B cell (primary cell): ENCODE measurements at regions of chr6 and their contacts with region 1.

Region 1: DNA sequence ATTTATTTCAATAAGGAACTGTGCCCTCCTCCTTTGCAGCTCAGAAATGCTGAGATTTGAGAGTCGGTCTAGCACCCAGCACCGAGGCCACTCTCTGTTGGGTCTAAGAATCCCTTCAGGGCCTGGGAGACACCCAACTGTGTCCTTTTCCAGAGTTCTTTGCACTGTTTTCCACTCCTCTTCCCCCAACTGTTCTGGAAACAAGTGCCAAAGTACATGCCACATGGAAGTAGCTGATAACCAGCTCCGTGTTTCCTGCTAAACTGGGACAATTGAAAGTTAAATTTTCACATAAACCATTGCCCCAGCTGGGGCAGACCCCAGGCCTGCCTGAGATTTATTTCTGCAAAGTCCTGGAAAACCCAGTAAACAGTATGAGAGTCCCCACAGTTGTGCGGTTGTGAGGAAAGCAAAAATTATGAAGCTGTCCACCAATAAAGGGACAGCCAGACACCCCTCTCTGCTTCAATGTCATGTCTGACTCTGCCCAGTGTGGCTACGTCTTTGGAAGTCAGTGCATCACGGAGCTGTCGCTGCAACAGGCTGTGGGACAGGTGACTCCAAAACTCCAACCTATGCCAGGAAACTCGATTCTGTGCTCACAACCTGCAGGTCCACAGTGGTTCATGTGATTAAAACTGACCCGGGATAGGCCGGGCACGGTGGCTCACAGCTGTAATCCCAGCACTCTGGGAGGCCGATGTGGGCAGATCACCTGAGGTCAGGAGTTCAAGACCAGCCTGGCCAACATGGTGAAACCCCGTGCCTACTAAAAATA is 178.0 kb upstream of the AFDN start:
- DNase-seq: no peak
- ATAC-seq: no peak
- H3K4me3 ChIP-seq: no peak overlapping the region
- H3K4me3 Mint-ChIP-seq: no peak overlapping the region
- H3K27ac ChIP-seq: no peak overlapping the region
- H3K27ac Mint-ChIP-seq: no peak overlapping the region
- H3K4me1 ChIP-seq: no peaks in the 10 kb centered on the region
- H3K4me1 Mint-ChIP-seq: peaks cover 12% of the 10 kb centered on the region
- H3K27me3 ChIP-seq: peaks cover 0 to 4% (median 2%) of the 10 kb centered on the region in 4 experiments
- H3K27me3 Mint-ChIP-seq: peaks cover 16% of the 10 kb centered on the region
- CTCF ChIP-seq: no peak

Region 2: GRCh38 chr6:167687116-167687725 is 38.5 kb after region 1 on chr6:
- CTCF ChIA-PET with region 1: no interaction called
- POLR2A ChIA-PET with region 1: no interaction called
- intact Hi-C with region 1: no loop called
- DNase-seq: no peak
- ATAC-seq: no peak
- H3K4me3 ChIP-seq: no peak overlapping the region
- H3K4me3 Mint-ChIP-seq: no peak overlapping the region
- H3K27ac ChIP-seq: no peak overlapping the region
- H3K27ac Mint-ChIP-seq: no peak overlapping the region
- H3K4me1 ChIP-seq: peaks cover 0 to 5% of the 10 kb centered on the region in 2 donors
- H3K4me1 Mint-ChIP-seq: peaks cover 17% of the 10 kb centered on the region
- H3K27me3 ChIP-seq: peaks cover 0 to 26% (median 2%) of the 10 kb centered on the region in 4 experiments
- H3K27me3 Mint-ChIP-seq: peaks cover 42% of the 10 kb centered on the region
- CTCF ChIP-seq: no peak

Region 3: GRCh38 chr6:167699141-167699931 is 50.6 kb after region 1 on chr6:
- CTCF ChIA-PET with region 1: no interaction called
- POLR2A ChIA-PET with region 1: interaction called, 10 read pairs
- intact Hi-C with region 1: no loop called
- DNase-seq: peak; percentile 75
- ATAC-seq: peak; percentile 89
- H3K4me3 ChIP-seq: peak overlapping the region; percentile 31 to 76 (median 50)
- H3K4me3 Mint-ChIP-seq: peak overlapping the region; percentile 90
- H3K27ac ChIP-seq: peak overlapping the region; percentile 81 to 82
- H3K27ac Mint-ChIP-seq: peak overlapping the region; percentile 92
- H3K4me1 ChIP-seq: peaks cover 16 to 21% of the 10 kb centered on the region in 2 donors
- H3K4me1 Mint-ChIP-seq: peaks cover 28% of the 10 kb centered on the region
- H3K27me3 ChIP-seq: peaks cover 0 to 12% (median 0%) of the 10 kb centered on the region in 4 experiments
- H3K27me3 Mint-ChIP-seq: peaks cover 3% of the 10 kb centered on the region
- CTCF ChIP-seq: no peak